ENCODE measurements at regions of chr6 and their contacts with region 1.

Region 1: DNA sequence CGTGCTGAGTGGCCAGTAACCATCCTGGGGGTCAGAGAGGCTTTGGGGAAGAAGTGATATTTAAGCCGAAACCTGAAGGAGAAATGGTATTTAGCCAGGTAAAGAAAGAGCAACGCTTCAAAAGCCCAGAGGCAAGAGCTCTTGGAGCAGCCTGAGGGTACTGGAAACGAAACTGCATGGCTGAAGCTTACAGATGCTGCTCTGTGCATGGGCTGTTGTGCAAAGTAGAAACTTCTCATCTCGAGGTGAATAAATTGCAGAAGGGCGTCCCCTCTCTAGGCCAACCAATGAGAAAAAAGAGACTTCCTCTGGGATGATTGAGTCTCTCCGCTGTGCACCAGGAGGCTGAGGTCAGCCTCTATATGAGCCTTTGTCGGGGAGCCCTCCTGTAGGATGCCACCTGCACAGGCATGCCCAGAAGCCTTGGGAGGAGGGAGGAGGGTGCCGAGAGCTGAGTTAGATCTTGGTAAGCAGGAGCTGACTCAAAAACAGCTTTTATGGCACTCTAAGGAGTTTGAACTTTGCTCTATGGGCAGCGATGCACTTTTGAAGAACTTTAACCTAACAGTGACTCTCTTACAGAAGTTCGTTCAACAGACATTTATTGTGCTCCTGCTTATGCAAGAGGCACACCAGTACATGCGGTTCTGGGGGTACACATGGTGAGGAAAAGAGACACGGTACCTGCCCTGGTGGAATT is 61.6 kb upstream of the EDN1 start:
- DNase-seq: no peak
- H3K4me3 ChIP-seq: no peak overlapping the region
- H3K27ac ChIP-seq: no peak overlapping the region
- H3K4me1 ChIP-seq: peaks cover 0 to 23% (median under 1%) of the 10 kb centered on the region in 3 donors
- H3K27me3 ChIP-seq: no peaks in the 10 kb centered on the region
- CTCF ChIP-seq: no peak
- POLR2A ChIP-seq: no peak

Region 2: GRCh38 chr6:12147557-12148316 is 80.9 kb before region 1 on chr6:
- intact Hi-C with region 1: loop called (anchors 5 kb)
- DNase-seq: no peak
- H3K4me3 ChIP-seq: no peak overlapping the region
- H3K27ac ChIP-seq: no peak overlapping the region
- H3K4me1 ChIP-seq: peaks cover 0 to 20% (median 0%) of the 10 kb centered on the region in 3 donors
- H3K27me3 ChIP-seq: no peaks in the 10 kb centered on the region
- CTCF ChIP-seq: peak in 1 of 6 experiments; percentile 6
- POLR2A ChIP-seq: no peak